Activated B cell treated with CpG ODN at 0.5 μM for 24 hours (primary cell): ENCODE measurements at regions of chr5 and their contacts with region 1.

Region 1: DNA sequence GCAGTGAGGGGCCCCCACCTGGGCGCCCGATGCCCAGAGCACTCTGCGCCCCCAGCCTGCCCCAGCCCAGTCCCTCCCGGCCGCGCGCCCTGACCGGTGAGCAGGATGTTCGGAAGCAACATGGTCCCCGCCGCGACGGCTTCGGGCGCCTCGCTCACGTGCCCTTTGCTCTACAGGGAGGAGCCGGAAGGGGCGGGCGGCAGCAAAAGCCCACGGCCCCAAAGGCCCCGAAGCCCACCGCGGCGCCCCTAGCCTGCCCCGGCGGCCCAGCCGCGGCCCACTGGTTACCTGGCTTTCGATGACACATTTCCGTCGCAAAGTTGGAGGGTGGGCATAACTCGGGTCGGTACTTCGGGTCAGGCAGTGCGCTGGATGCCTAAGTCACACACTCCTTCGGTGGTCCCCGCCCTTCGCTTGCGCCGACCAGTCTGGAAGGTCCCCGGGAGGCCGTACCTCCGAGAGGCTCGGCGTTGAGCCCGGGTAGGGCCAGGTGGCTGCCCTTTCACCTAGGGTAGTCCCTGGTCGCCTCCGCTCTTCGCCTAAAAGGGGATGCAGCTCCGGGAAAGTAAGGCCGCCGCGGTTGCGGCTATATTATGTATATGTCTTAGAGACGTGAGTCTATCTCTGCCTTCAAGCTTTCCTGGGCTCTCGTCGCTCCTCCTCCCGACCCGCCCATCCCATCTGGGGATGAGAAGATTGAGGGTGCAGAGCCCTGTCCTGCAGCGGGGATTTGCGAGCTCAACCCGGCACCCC is at the starts of genes AK6, RAD17 and TAF9:
- DNase-seq: peak; percentile 93
- ATAC-seq: peak; percentile 94
- H3K4me3 Mint-ChIP-seq: peak within 1 kb of the TSS; percentile 97
- H3K27ac Mint-ChIP-seq: peak within 1 kb of the TSS; percentile 98
- H3K4me1 Mint-ChIP-seq: peaks cover 53% of the 10 kb centered on the region
- H3K27me3 Mint-ChIP-seq: no peaks in the 10 kb centered on the region
- CTCF ChIP-seq: no peak
- total RNA-seq, gene AK6: 38.6 and 39.3 TPM in 2 replicates
- total RNA-seq, gene RAD17: 25.9 and 30.6 TPM in 2 replicates
- total RNA-seq, gene TAF9: 44.7 and 45.4 TPM in 2 replicates

Region 2: DNA sequence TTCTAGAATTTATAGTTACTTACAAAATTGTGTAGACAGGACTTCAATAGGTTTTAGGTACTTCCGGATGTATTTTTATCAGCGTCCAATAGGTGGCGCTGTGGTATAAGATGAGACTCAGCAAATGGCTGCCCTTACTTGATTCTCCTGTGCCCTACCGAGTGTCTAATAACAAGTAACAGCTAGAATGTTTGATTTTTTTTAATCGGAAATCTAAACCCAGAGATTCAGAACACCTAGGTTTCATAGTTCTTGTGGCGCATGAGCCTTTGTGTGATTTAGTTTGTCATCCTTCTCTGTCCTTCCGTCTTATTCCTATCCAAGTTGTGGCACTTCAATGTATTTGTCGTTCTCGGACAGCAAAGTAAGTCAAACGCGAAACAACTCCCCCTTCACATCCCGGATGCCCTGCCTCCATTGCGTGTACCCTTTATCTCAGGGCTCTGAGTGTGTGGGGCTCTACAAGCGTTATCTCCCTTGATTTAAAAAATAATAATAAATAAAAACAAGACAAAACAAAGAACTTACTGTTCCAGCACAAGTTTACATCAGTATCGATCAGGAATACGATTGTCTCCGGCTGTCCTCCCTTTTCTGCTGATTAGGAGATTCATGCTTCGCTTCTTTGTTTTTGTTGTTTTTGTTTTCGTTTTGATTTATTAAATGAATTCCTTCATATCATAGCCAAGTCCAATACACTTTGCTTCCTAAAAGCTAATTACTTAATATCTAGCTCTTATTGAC is 326.5 kb before region 1 on chr5:
- CTCF ChIA-PET with region 1: interaction called, 3 read pairs
- POLR2A ChIA-PET with region 1: no interaction called
- intact Hi-C with region 1: loop called (anchors 1 kb)
- DNase-seq: peak; percentile 29
- ATAC-seq: peak; percentile 96
- H3K4me3 Mint-ChIP-seq: peak overlapping the region; percentile 84
- H3K27ac Mint-ChIP-seq: peak overlapping the region; percentile 79
- H3K4me1 Mint-ChIP-seq: no peaks in the 10 kb centered on the region
- H3K27me3 Mint-ChIP-seq: no peaks in the 10 kb centered on the region
- CTCF ChIP-seq: peak; percentile 27

Region 3: DNA sequence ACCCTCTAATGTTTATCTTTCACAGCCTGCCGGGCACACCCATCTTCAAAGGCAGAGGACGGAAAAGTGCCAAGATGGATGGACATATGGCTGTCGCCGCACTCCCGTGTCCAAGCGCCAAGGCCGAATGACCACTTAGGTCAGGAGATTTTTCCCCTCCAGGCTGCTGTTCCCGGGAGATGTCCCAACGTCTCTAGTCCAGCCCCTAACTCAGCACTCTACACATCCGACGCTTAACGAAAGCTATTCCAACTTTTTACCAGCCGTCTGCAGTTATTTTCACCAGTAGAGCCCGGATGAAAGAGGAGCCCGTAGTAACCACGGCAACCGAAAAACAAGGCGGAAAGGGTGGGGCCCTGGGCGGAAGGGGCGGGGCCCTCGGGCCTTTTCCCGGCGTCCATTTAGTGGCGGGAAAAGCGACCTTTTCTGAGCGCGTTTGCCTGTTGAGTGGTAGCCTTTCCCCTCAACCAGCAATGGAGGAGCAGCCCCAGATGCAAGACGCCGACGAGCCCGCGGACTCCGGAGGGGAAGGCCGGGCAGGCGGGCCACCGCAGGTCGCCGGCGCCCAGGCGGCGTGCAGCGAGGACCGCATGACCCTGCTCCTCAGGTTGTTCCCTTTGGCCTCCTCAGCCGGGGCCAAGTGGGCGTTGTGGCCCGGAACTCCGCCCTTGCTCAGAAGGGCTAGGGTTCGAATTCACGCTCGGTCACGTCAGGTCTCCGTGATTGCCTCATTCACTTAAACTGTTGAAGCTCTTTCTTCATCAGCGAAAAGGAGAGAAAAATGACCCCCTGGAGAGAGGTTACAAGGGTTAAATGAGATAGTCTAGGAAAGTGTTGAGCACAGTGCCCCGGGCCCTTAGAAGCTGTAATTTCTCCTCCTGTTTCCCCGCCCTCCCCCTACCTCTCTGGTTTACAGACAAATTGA is 180.1 kb before region 1 on chr5 and contains the start of gene CENPH:
- CTCF ChIA-PET with region 1: no interaction called
- POLR2A ChIA-PET with region 1: no interaction called
- intact Hi-C with region 1: loop called (anchors 1 kb)
- DNase-seq: peak; percentile 88
- ATAC-seq: peak; percentile 92
- H3K4me3 Mint-ChIP-seq: peak within 1 kb of the TSS; percentile 92
- H3K27ac Mint-ChIP-seq: peak within 1 kb of the TSS; percentile 90
- H3K4me1 Mint-ChIP-seq: peaks cover 14% of the 10 kb centered on the region
- H3K27me3 Mint-ChIP-seq: no peaks in the 10 kb centered on the region
- CTCF ChIP-seq: no peak
- total RNA-seq, gene CENPH: 13.0 and 13.5 TPM in 2 replicates

Region 4: DNA sequence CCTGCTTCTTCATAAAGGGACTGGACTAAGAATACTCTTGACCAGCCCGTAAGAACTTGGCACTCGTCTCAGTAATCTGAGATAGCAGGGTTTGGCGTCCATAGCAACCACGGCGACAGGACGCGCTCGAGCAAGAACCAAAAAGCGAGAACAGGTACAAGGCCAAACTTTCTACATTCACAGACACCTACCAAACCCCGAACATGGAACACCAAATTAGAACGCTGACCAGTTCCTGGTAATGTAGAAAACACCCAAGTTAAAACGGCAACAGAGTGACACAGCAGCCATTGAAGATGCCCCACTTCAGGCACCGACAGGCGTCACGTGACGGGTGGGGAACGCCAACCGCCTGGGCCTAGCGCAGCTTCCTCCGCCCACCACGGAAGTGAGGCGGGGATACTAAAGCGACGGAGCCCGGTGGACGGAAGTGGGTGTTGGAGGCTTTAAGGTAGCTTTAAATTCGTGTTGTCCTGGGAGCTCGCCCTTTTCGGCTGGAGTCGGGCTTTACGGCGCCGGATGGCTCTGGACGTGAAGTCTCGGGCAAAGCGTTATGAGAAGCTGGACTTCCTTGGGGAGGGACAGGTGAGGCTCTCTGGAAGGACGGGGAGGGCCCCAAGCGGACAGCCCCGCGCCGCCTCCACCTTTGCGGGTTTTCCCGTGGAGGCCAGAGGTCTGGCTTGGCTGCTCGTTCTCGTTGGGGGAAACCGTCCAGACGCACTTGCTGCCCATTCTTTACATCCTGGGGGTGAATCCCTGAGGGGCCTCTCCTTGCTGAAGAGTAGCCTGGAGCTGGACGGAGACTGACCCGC is 134.9 kb before region 1 on chr5 and contains the start of gene CDK7:
- CTCF ChIA-PET with region 1: no interaction called
- POLR2A ChIA-PET with region 1: interaction called, 3 read pairs
- intact Hi-C with region 1: loop called (anchors 1 kb)
- DNase-seq: peak; percentile 88
- ATAC-seq: peak; percentile 100
- H3K4me3 Mint-ChIP-seq: peak within 1 kb of the TSS; percentile 97
- H3K27ac Mint-ChIP-seq: peak within 1 kb of the TSS; percentile 88
- H3K4me1 Mint-ChIP-seq: peaks cover 35% of the 10 kb centered on the region
- H3K27me3 Mint-ChIP-seq: no peaks in the 10 kb centered on the region
- CTCF ChIP-seq: no peak
- total RNA-seq, gene CDK7: 27.1 and 33.5 TPM in 2 replicates

Region 5: GRCh38 chr5:69334793-69335268 is 34.7 kb before region 1 on chr5:
- CTCF ChIA-PET with region 1: interaction called, 4 read pairs
- POLR2A ChIA-PET with region 1: interaction called, 13 read pairs
- intact Hi-C with region 1: loop called (anchors 1 kb)
- DNase-seq: peak; percentile 56
- ATAC-seq: peak; percentile 72
- H3K4me3 Mint-ChIP-seq: peak overlapping the region; percentile 46
- H3K27ac Mint-ChIP-seq: peak overlapping the region; percentile 59
- H3K4me1 Mint-ChIP-seq: peaks cover 25% of the 10 kb centered on the region
- H3K27me3 Mint-ChIP-seq: no peaks in the 10 kb centered on the region
- CTCF ChIP-seq: no peak